ENCODE measurements at regions of chr12 and their contacts with region 1.

Region 1: DNA sequence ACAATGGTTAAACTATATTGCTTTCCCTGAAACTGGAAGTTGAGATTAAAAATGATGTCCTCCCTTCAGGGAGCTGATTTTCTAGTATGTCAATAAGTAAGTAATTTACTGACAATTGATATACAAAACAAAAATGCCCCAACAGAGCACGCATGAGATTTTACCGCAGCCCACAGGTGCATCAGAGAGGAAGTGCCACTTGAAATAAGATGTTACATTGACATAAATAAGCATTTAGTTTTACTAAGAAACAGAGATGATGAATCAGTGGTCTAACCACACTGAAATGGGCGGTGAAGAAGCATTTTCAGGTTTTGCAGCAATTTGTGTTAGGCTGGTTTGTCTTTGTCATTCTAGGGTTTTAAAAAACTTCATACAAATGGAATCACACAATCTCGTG is 8.8 kb upstream of the CLECL1 start:
- DNase-seq: peak; percentile 89
- H3K4me3 Mint-ChIP-seq: peak overlapping the region; percentile 79
- H3K27ac Mint-ChIP-seq: peak overlapping the region; percentile 98
- H3K4me1 Mint-ChIP-seq: peaks cover 71% of the 10 kb centered on the region
- H3K27me3 Mint-ChIP-seq: no peaks in the 10 kb centered on the region

Region 2: DNA sequence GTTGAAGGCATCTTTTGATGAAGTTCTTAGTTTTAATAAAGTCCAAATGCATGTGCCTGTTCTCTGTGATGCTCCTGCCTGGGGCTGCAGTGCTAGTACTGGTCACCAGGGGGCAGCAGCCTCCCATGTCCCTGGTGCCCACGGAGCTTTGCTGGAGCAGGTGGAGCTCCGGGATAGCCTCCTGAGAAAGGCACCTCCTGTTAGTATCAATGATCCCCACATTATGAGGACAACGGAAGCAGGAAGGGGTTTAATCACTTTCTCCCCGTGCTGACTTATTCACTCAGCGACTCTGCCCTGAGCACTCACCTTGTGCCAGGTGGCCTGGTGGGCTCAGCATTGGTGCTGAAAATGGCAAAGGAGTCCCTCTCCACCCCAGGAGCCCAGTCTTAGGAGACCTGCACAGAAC is 410.5 kb before region 1 on chr12:
- CTCF ChIA-PET with region 1: interaction called, 10 read pairs
- POLR2A ChIA-PET with region 1: no interaction called
- DNase-seq: peak; percentile 73
- H3K4me3 Mint-ChIP-seq: no peak overlapping the region
- H3K27ac Mint-ChIP-seq: no peak overlapping the region
- H3K4me1 Mint-ChIP-seq: peaks cover 14% of the 10 kb centered on the region
- H3K27me3 Mint-ChIP-seq: no peaks in the 10 kb centered on the region

Region 3: GRCh38 chr12:9634177-9634803 is 107.4 kb before region 1 on chr12:
- CTCF ChIA-PET with region 1: interaction called, 23 read pairs
- POLR2A ChIA-PET with region 1: interaction called, 11 read pairs
- DNase-seq: peak; percentile 80
- H3K4me3 Mint-ChIP-seq: no peak overlapping the region
- H3K27ac Mint-ChIP-seq: no peak overlapping the region
- H3K4me1 Mint-ChIP-seq: peaks cover 50% of the 10 kb centered on the region
- H3K27me3 Mint-ChIP-seq: peaks cover 7% of the 10 kb centered on the region

Region 4: GRCh38 chr12:9707864-9708808 is 33.6 kb before region 1 on chr12:
- CTCF ChIA-PET with region 1: interaction called, 19 read pairs
- POLR2A ChIA-PET with region 1: interaction called, 18 read pairs
- DNase-seq: peak; percentile 74
- H3K4me3 Mint-ChIP-seq: peak overlapping the region; percentile 7
- H3K27ac Mint-ChIP-seq: peak overlapping the region; percentile 70
- H3K4me1 Mint-ChIP-seq: peaks cover 40% of the 10 kb centered on the region
- H3K27me3 Mint-ChIP-seq: no peaks in the 10 kb centered on the region

Region 5: GRCh38 chr12:9797722-9798619 is 56.2 kb after region 1 on chr12:
- CTCF ChIA-PET with region 1: interaction called, 587 read pairs
- POLR2A ChIA-PET with region 1: interaction called, 812 read pairs
- DNase-seq: peak; percentile 76
- H3K4me3 Mint-ChIP-seq: no peak overlapping the region
- H3K27ac Mint-ChIP-seq: peak overlapping the region; percentile 92
- H3K4me1 Mint-ChIP-seq: peaks cover 47% of the 10 kb centered on the region
- H3K27me3 Mint-ChIP-seq: peaks cover 15% of the 10 kb centered on the region

Region 6: DNA sequence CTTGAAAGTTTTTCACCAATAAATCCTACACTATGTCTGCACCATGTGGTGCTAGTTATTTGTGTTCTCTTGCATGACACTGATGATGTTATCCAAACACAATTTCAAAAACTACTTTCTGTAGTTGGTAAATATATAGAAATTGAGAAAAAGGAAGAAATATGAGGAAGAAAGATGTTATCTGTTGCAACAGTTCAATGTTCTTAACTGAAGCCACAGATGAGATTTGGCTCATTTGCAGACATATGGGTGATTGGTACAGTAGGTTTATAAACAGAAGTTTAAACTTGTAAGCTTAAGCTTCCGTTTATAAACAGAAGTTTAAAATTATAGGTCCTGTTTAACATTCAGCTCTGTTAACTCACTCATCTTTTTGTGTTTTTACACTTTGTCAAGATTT is 229.5 kb after region 1 on chr12 and contains the start of gene CLEC12A:
- CTCF ChIA-PET with region 1: no interaction called
- POLR2A ChIA-PET with region 1: no interaction called
- DNase-seq: no peak
- H3K4me3 Mint-ChIP-seq: no peak within 1 kb of the TSS
- H3K27ac Mint-ChIP-seq: no peak within 1 kb of the TSS
- H3K4me1 Mint-ChIP-seq: no peaks in the 10 kb centered on the region
- H3K27me3 Mint-ChIP-seq: peaks cover 27% of the 10 kb centered on the region
- total RNA-seq, gene CLEC12A: 0.60 to 0.65 TPM

Region 7: DNA sequence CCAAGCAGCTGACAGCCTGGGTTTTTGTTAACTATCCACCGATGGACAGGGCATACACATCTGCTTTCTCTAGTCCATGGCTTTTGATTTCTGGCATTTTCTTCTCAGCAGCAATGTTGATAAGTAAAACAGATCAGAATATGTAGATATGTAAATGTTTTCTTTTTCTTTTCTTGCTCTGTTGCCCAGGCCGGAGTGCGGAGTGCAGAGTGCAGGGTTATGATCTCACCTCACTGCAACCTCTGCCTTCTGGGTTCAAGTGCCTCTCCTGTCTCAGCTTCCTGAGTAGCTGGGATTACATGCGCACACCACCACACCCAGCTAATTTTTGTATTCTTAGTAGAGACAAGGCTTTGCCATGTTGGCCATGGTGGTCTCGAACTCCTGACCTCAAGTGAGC is 316.7 kb after region 1 on chr12:
- CTCF ChIA-PET with region 1: no interaction called
- POLR2A ChIA-PET with region 1: no interaction called
- DNase-seq: no peak
- H3K4me3 Mint-ChIP-seq: no peak overlapping the region
- H3K27ac Mint-ChIP-seq: no peak overlapping the region
- H3K4me1 Mint-ChIP-seq: no peaks in the 10 kb centered on the region
- H3K27me3 Mint-ChIP-seq: peaks cover 29% of the 10 kb centered on the region

Region 8: GRCh38 chr12:10448236-10448635 is 706.5 kb after region 1 on chr12:
- CTCF ChIA-PET with region 1: no interaction called
- POLR2A ChIA-PET with region 1: no interaction called
- DNase-seq: no peak
- H3K4me3 Mint-ChIP-seq: no peak overlapping the region
- H3K27ac Mint-ChIP-seq: no peak overlapping the region
- H3K4me1 Mint-ChIP-seq: no peaks in the 10 kb centered on the region
- H3K27me3 Mint-ChIP-seq: no peaks in the 10 kb centered on the region

Measured in activated CD4-positive, alpha-beta memory T cell treated with anti-CD3 and anti-CD28 coated beads, Interleukin-2, amount 10 ng/mL, durations not matched to agents 7 days and 5 days (primary cell).